CD8-positive, alpha-beta memory T cell (primary cell): ENCODE measurements at regions of chr12 and their contacts with region 1.

Region 1: DNA sequence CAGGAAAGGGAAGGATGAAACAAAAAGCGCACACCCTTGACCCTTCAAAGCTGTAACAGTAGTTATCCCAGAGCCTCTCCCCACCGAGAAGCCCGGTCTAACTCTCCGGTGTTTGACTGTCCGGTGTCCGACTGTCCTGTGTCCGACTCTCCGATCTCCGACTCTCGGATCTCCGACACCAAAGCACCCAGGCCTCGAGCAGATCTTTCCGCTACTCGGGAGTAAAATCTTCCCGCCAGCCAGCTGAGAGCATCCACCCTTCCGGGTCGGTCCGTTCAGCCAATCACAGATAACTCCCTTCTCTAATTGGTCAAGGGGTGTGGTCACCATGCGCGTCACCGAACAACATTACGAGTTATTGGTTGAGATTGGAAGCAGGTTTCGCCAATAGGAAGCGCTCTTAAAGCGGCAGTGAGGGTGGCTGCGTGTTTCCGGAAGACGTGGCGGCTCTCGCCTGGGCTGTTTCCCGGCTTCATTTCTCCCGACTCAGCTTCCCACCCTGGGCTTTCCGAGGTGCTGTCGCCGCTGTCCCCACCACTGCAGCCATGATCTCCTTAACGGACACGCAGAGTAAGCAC is at the starts of genes GOLT1B and RECQL:
- DNase-seq: peak; percentile 78 to 94 (median 93)
- H3K4me3 ChIP-seq: peak within 1 kb of the TSS; percentile 92
- H3K4me3 Mint-ChIP-seq: no peak within 1 kb of the TSS
- H3K27ac ChIP-seq: peak within 1 kb of the TSS; percentile 80
- H3K27ac Mint-ChIP-seq: peak within 1 kb of the TSS in 1 of 8 donors; percentile 70
- H3K4me1 ChIP-seq: peaks cover 56% of the 10 kb centered on the region
- H3K4me1 Mint-ChIP-seq: peaks cover 44 to 70% (median 45%) of the 10 kb centered on the region in 3 donors
- H3K27me3 ChIP-seq: no peaks in the 10 kb centered on the region
- H3K27me3 Mint-ChIP-seq: no peaks in the 10 kb centered on the region
- total RNA-seq, gene GOLT1B: 48.1 to 52.3 TPM
- total RNA-seq, gene RECQL: 95.1 to 101 TPM

Region 2: GRCh38 chr12:21518451-21518850 is 17.0 kb after region 1 on chr12:
- CTCF ChIA-PET with region 1: no interaction called
- POLR2A ChIA-PET with region 1: no interaction called
- DNase-seq: no peak
- H3K4me3 ChIP-seq: no peak overlapping the region
- H3K4me3 Mint-ChIP-seq: no peak overlapping the region
- H3K27ac ChIP-seq: no peak overlapping the region
- H3K27ac Mint-ChIP-seq: peak overlapping the region in 1 of 8 donors; percentile 11
- H3K4me1 ChIP-seq: no peaks in the 10 kb centered on the region
- H3K4me1 Mint-ChIP-seq: no peaks in the 10 kb centered on the region
- H3K27me3 ChIP-seq: no peaks in the 10 kb centered on the region
- H3K27me3 Mint-ChIP-seq: no peaks in the 10 kb centered on the region

Region 3: GRCh38 chr12:21657326-21658077 is 156.0 kb after region 1 on chr12 and contains the start of gene LDHB:
- CTCF ChIA-PET with region 1: interaction called, 4 read pairs
- POLR2A ChIA-PET with region 1: interaction called, 17 read pairs
- DNase-seq: peak; percentile 85 to 95 (median 87)
- H3K4me3 ChIP-seq: peak within 1 kb of the TSS; percentile 91
- H3K4me3 Mint-ChIP-seq: peak within 1 kb of the TSS; percentile 92 to 99 (median 96)
- H3K27ac ChIP-seq: peak within 1 kb of the TSS; percentile 78
- H3K27ac Mint-ChIP-seq: peak within 1 kb of the TSS; percentile 90 to 99 (median 96)
- H3K4me1 ChIP-seq: peaks cover 39% of the 10 kb centered on the region
- H3K4me1 Mint-ChIP-seq: peaks cover 54 to 68% (median 60%) of the 10 kb centered on the region in 3 donors
- H3K27me3 ChIP-seq: no peaks in the 10 kb centered on the region
- H3K27me3 Mint-ChIP-seq: no peaks in the 10 kb centered on the region
- total RNA-seq, gene LDHB: 1,700 to 1,721 TPM